Cardiac septum (tissue), 1 donor: ENCODE measurements at regions of chr5 and their contacts with region 1.

Region 1: GRCh38 chr5:54243473-54244080 is 66.8 kb downstream of the ARL15 start:
- DNase-seq: no peak

Region 2: GRCh38 chr5:54421976-54422375 is 178.4 kb after region 1 on chr5:
- intact Hi-C with region 1: loop called (anchors 5 kb)
- DNase-seq: no peak

Region 3: DNA sequence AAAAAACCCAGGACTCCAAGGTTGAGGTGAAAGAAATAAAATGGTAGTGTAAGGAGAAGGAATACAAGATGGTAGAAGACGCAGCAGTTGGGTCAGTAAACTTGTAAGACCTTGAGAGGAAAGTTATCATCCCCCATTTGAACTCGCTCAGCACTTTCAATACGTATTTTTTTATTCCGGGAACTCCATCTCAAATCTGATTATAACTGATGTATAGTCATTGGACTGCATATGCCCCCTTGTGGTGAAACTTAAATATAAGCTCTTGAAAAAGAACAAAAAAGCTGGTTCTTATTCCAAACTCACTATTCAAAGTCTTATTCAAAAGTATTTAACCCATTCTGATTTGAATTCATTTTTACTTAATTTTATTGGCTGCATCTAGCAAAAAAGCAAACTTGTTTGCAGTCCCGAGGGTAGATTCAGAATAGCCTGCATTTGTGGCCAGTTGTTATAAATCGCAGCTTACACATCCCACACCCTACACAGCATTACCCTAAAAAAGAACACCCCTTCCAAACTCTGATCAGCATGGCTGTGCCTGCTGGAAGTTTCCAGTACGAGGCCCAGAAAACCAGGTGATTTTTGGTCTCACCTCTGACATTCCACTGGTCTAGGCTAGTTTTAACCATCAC is 623.9 kb after region 1 on chr5:
- intact Hi-C with region 1: loop called (anchors 10 kb)
- DNase-seq: no peak